Pancreas (tissue), 10 donors: ENCODE measurements at regions of chr7 and their contacts with region 1.

Region 1: GRCh38 chr7:18570890-18571478 is 75.4 kb downstream of the HDAC9 start:
- DNase-seq: no peak
- ATAC-seq: peak in 3 of 4 donors; percentile 65 to 77 (median 73)
- H3K4me3 ChIP-seq: no peak overlapping the region
- H3K27ac ChIP-seq: no peak overlapping the region
- H3K4me1 ChIP-seq: peaks cover 0 to 7% (median 0%) of the 10 kb centered on the region in 3 donors
- H3K27me3 ChIP-seq: no peaks in the 10 kb centered on the region
- CTCF ChIP-seq: peak in 2 of 4 donors; percentile 7 to 10

Region 2: DNA sequence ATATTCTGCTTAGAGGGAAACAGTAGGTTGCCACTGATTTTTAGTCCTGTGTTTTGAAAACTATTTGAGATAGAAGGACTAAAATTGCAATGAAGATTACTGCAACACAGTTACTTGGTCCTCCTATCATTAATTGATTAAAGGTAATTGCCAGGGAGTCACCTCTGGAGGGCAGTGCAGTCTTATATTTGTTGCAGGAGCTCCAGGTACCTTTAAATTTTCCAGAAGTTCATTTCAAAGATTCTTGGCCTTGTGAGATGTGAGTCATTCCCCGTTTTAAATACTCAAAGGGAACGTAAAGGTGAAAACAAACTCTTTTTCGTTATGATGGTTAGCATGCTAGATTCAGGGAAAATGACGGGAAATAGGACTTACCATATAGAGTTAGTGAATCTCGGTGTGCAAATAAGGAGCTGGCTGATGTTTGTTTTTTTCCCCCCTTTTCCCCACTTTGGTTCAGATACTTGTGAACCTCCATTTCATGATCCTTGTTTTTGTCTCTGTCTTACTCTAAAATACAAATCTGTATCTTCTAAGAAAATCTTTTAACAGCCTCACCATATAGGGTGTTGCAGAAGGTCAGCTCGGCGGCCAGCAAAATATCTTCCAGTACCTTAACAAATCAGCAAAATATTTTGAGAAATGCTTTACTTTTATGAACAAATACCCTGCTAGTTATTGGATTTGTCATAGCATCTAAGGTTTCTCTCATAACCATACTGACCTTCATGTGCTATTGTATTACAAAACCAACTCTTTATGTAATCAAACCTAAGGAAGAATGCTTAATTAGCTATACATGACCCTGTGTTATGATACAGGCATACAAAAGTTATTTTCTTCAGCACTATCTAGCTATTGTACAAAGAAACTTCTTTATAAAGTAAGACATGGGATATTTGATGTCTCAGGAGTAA is 218.4 kb before region 1 on chr7:
- intact Hi-C with region 1: loop called in 2 of 3 experiments (anchors 5 to 10 kb)
- DNase-seq: peak in 2 of 6 donors; percentile 6 to 46
- ATAC-seq: peak; percentile 56 to 89 (median 86)
- H3K4me3 ChIP-seq: no peak overlapping the region
- H3K27ac ChIP-seq: no peak overlapping the region
- H3K4me1 ChIP-seq: no peaks in the 10 kb centered on the region
- H3K27me3 ChIP-seq: no peaks in the 10 kb centered on the region
- CTCF ChIP-seq: peak in 2 of 4 donors; percentile 29 to 31

Region 3: GRCh38 chr7:18623389-18623788 is 52.4 kb after region 1 on chr7:
- intact Hi-C with region 1: no loop called
- DNase-seq: no peak
- ATAC-seq: no peak
- H3K4me3 ChIP-seq: no peak overlapping the region
- H3K27ac ChIP-seq: no peak overlapping the region
- H3K4me1 ChIP-seq: no peaks in the 10 kb centered on the region
- H3K27me3 ChIP-seq: no peaks in the 10 kb centered on the region
- CTCF ChIP-seq: no peak